OCI-LY7 (cell line): ENCODE measurements at regions of chr2 and their contacts with region 1.

Region 1: DNA sequence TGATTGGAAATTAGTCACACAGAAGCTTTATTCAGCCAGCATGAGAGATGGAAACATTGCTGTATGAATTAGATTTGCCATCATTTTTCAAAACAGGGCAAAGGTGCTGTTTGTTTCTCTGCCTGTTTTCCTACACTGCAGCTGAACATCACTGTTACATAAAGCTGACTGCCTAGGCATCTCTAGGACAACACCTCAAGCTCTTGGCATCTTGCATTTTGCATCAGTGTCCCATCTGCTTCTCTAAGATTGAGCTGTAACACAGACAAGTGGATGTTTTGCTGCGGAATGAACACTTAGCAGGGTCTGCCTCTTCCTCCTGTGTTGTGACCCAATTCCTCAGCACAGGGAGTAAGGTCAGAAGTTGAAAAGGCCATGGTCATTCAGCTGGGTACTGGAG is 4.9 kb downstream of the CCT7 start:
- DNase-seq: no peak
- H3K4me3 ChIP-seq: no peak overlapping the region
- H3K27ac ChIP-seq: no peak overlapping the region
- H3K4me1 ChIP-seq: peaks cover 24% of the 10 kb centered on the region
- CTCF ChIP-seq: no peak

Region 2: GRCh38 chr2:73253901-73254300 is 14.9 kb after region 1 on chr2:
- CTCF ChIA-PET with region 1: interaction called, 3 read pairs
- POLR2A ChIA-PET with region 1: interaction called, 11 read pairs
- intact Hi-C with region 1: no loop called
- DNase-seq: no peak
- H3K4me3 ChIP-seq: no peak overlapping the region
- H3K27ac ChIP-seq: no peak overlapping the region
- H3K4me1 ChIP-seq: no peaks in the 10 kb centered on the region
- CTCF ChIP-seq: no peak

Region 3: DNA sequence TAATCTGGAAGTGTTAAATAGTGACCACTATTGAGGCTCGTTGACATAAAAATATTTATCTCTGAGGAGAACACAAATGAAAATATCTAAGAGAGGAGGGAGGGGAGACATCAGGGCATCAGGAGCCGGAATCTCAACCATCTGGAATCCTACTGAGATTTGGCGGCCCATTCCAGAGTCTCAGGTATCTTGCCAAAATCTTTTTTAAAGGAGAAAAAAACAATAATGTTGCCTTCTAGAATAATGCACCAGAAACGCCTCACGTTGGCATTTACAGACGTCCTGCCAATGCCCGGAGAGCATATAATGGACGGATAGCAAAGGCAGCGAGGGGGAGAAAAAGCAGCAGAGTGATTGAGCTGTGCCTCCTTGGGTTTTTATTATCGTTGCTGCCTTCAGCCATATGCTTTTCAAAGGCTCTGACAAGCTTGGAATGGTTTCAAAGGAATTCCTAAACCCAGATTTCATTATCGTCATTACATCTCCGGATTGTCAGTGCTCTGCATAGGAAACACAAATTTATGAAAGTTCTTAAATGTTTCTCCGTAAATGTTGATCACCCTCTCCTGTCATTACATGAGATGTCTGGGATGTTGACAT is 85.2 kb after region 1 on chr2:
- CTCF ChIA-PET with region 1: no interaction called
- POLR2A ChIA-PET with region 1: no interaction called
- intact Hi-C with region 1: no loop called
- DNase-seq: no peak
- H3K4me3 ChIP-seq: no peak overlapping the region
- H3K27ac ChIP-seq: no peak overlapping the region
- H3K4me1 ChIP-seq: no peaks in the 10 kb centered on the region
- CTCF ChIP-seq: no peak

Region 4: DNA sequence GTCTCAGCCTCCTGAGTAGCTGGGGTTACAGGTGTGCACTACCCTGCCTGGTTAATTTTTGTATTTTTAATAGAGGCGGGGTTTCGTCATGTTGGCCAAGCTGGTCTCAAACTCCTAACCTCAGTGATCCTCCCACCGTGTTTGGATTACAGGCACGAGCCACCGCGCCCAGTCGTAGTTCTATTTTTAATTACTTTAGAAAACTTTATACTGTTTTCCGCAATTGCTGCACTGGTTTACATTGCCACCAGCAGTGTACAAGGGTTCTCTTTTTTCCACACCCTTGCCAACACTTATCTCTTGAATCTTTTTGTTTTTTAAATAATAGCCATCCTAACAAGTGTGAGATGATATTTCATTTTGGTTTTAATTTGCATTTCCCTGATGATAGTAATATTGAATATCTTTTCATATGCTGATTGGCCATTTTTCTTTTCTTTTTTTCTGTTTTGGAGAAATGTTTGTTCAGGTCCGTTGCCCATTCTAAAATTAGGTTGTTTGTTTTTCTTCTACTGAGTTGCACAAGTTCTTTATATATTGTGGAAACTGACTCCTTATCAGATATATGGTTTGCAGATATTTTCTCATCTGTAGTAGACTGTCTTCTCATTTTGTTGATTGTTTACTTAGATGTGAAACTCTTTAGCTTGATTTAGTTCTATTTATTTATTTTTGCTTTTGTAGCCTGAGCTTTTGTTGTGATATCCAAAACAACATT is 163.6 kb after region 1 on chr2:
- CTCF ChIA-PET with region 1: no interaction called
- POLR2A ChIA-PET with region 1: no interaction called
- intact Hi-C with region 1: no loop called
- DNase-seq: no peak
- H3K4me3 ChIP-seq: no peak overlapping the region
- H3K27ac ChIP-seq: no peak overlapping the region
- H3K4me1 ChIP-seq: no peaks in the 10 kb centered on the region
- CTCF ChIP-seq: no peak

Region 5: DNA sequence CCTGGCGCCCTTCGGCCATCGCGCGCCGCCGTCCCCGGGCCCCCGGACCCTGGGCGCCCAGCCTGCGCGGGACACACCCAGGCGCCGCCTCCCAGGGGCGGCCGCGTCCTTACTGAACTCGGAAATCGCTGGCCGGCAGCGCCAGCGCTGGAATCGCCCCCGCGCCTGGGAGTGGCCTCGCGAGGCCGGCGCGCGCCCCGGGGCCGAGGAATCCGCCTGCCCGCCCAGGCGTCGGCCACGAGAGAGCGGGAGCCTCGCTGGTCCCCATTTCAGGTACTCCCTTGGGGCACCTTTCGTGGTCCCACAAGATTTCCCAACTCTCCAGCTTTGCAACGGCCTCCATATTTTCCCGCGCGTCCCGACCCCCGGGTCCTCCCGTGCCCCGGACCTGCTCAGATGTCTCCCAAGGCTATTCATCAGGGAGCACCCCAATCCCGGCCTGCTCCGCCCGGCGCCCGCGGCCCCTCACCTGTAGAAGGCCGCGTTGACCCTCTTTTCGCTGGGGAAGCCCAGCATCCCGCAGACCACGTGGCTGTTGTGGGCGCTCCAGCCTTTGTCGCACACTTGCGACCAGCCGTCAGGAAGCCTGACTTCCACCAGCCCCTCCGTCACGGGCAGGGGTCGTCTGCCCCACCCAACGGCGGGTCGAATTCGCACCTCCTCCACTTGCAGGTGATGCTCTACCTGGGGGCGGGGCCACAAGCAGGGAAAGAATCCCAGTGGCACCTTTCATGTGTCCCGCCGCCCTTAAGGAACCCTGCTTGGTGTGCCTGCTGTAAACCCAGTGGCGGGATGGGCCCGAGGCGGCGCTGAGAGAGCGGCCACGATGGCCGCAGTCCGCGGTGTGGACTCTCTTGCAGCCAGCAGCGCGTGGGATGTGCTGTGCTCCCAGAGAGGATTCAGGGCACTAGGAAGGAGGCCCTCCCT is 1310.2 kb after region 1 on chr2:
- CTCF ChIA-PET with region 1: no interaction called
- POLR2A ChIA-PET with region 1: no interaction called
- intact Hi-C with region 1: no loop called
- DNase-seq: no peak
- H3K4me3 ChIP-seq: no peak overlapping the region
- H3K27ac ChIP-seq: no peak overlapping the region
- H3K4me1 ChIP-seq: peaks cover 7% of the 10 kb centered on the region
- CTCF ChIP-seq: no peak